ENCODE measurements at regions of chr14 and their contacts with region 1.

Region 1: DNA sequence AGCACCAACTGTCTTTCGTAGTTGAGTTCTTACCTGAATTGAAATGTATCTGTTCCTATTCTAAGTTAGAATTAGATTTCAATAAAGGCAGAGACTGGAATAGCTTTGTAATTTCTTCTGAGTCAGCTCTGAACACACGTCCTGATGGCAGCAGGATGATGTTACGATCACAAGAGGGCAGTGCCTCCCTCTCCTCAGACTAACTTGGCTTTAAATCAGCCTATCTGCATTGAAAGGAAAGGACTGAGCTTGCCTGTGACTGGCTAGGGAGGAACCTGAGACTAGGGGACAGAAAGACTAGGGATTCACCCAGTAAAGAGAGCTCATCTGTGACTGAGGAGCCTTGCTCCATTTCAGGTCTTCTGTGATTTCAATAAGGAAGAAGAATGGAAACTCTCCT is 323.7 kb upstream of the OR4E1 start:
- DNase-seq: peak; percentile 31
- ATAC-seq: peak; percentile 94
- H3K4me3 ChIP-seq: no peak overlapping the region
- H3K27ac ChIP-seq: no peak overlapping the region
- H3K4me1 ChIP-seq: no peaks in the 10 kb centered on the region
- H3K27me3 ChIP-seq: peaks cover 5% of the 10 kb centered on the region; the same call in 1 of the 2 replicates
- CTCF ChIP-seq: peak; percentile 8 to 42 (median 37); a peak in 4 of 6 replicates
- POLR2A ChIP-seq: no peak
- RAD21 ChIP-seq: no peak

Region 2: GRCh38 chr14:21978184-21978998 is 18.9 kb before region 1 on chr14:
- CTCF ChIA-PET with region 1: interaction called, 100 read pairs
- POLR2A ChIA-PET with region 1: interaction called, 3 read pairs
- RAD21 ChIA-PET with region 1: no interaction called
- intact Hi-C with region 1: no loop called
- DNase-seq: peak; percentile 16
- ATAC-seq: peak; percentile 78
- H3K4me3 ChIP-seq: no peak overlapping the region
- H3K27ac ChIP-seq: no peak overlapping the region
- H3K4me1 ChIP-seq: no peaks in the 10 kb centered on the region
- H3K27me3 ChIP-seq: peaks cover 26% of the 10 kb centered on the region
- CTCF ChIP-seq: peak in 2 of 3 experiments; percentile 93 to 94; a peak in 4 of 6 replicates
- POLR2A ChIP-seq: no peak
- RAD21 ChIP-seq: peak; percentile 31; the same call in 1 of the 2 replicates

Region 3: GRCh38 chr14:22010545-22011252 is 13.4 kb after region 1 on chr14:
- CTCF ChIA-PET with region 1: interaction called, 10 read pairs
- POLR2A ChIA-PET with region 1: no interaction called
- RAD21 ChIA-PET with region 1: no interaction called
- intact Hi-C with region 1: no loop called
- DNase-seq: no peak
- ATAC-seq: no peak
- H3K4me3 ChIP-seq: no peak overlapping the region
- H3K27ac ChIP-seq: no peak overlapping the region
- H3K4me1 ChIP-seq: no peaks in the 10 kb centered on the region
- H3K27me3 ChIP-seq: peaks cover 14% of the 10 kb centered on the region; the same call in 1 of the 2 replicates
- CTCF ChIP-seq: no peak
- POLR2A ChIP-seq: no peak
- RAD21 ChIP-seq: no peak